ENCODE measurements at regions of chr5 and their contacts with region 1.

Region 1: GRCh38 chr5:116137544-116138378 is 52.9 kb downstream of the COMMD10 start:
- DNase-seq: no peak
- ATAC-seq: peak; percentile 43

Region 2: DNA sequence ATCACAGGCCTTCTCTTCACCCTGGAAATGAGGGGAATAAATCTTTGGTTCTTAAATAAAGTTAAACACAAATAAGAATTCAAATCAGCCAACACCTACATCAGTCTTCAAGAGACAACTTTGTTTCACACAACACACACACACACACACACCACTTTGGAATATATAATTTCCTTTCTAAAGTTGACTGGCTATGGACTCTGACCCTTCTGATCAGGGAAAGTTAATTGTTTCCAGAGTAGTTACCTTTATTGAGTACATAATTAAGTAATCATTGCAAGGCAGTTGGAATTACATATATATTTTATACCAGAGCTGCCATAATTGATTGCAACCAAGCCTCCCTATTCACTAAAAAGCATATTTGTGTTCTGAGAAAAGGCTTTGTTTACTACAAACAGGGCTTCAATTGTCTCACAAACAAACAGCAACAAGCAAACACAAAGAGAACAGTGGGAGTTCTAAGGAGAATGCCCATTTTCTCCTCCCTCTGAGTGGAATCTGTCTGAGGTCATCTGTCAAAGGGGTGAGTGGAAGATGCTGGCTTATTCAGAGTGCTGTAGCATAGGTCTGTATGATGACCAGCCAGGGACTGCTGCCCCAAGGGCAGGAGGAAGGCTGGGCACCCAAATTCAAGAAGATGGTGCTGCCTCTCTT is 300.3 kb after region 1 on chr5:
- intact Hi-C with region 1: loop called (anchors 5 kb)
- DNase-seq: no peak
- ATAC-seq: no peak

Region 3: DNA sequence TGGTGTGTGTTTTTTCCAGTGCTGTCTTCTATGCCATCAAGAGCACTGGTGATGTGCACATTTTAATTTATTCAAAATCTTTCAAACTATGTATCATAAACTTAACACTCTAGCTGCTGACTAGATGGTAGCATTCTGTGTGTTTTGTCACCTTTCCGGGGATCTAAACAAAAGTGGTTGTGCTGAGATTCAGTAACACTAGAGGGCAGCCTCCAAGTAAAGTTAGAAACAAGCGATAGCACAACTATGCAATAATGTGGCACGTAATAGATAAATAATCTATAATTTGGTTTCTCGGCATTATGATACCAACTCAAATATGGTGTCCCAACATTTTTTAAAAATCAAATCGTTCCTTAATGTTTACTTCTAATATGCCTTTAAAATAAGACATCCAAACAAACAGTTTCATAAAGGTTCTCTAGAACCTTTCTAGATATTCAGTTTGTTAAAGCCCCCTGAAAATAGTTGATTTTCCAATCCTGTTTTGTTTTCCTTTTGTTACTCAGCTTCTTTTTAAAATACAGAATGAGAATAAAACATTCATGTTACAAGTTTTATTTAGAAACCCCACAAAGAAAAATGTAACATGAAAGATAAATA is 420.0 kb after region 1 on chr5:
- intact Hi-C with region 1: loop called (anchors 10 kb)
- DNase-seq: no peak
- ATAC-seq: peak; percentile 69